ENCODE measurements at regions of chr9 and their contacts with region 1.

Region 1: GRCh38 chr9:68704814-68705530 is at the start of gene PIP5K1B:
- DNase-seq: peak; percentile 83
- H3K4me3 ChIP-seq: peak within 1 kb of the TSS; percentile 51 to 88 (median 74)
- H3K27ac ChIP-seq: peak within 1 kb of the TSS; percentile 46 to 88 (median 85)
- H3K4me1 ChIP-seq: peaks cover 0 to 29% (median 12%) of the 10 kb centered on the region in 4 donors
- H3K27me3 ChIP-seq: peaks cover 0 to 9% (median 0%) of the 10 kb centered on the region in 3 donors
- CTCF ChIP-seq: no peak
- EP300 ChIP-seq: no peak
- POLR2A ChIP-seq: peak in 1 of 2 donors; percentile 67
- total RNA-seq, gene PIP5K1B: 10.3 to 23.5 (median 17.5) TPM

Region 2: DNA sequence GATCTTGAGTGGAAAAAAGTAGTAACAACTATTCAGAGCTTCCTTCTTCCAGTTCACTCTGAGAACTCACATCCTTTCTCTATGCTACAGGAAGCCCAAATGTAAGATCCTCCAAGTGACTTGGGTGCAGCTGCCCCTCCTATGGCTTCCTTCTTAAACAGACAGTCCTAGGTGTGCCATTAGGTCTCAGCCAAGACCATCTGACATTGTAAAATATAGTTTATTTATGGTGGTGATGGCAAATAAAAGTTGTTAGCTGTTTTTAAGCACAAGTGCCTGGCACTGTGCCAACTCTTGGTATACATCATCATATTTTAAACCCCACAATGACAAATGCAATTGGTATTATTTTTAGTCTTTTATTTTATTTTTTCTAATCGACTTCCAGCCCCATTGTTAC is 222.4 kb before region 1 on chr9:
- intact Hi-C with region 1: no loop called
- DNase-seq: no peak
- H3K4me3 ChIP-seq: no peak overlapping the region
- H3K27ac ChIP-seq: peak overlapping the region; percentile 67 to 79 (median 76)
- H3K4me1 ChIP-seq: peaks cover 0 to 47% (median 36%) of the 10 kb centered on the region in 4 donors
- H3K27me3 ChIP-seq: no peaks in the 10 kb centered on the region
- CTCF ChIP-seq: no peak
- EP300 ChIP-seq: no peak
- POLR2A ChIP-seq: no peak

Region 3: GRCh38 chr9:68768619-68769018 is 63.6 kb after region 1 on chr9:
- intact Hi-C with region 1: no loop called
- DNase-seq: no peak
- H3K4me3 ChIP-seq: no peak overlapping the region
- H3K27ac ChIP-seq: no peak overlapping the region
- H3K4me1 ChIP-seq: no peaks in the 10 kb centered on the region
- H3K27me3 ChIP-seq: no peaks in the 10 kb centered on the region
- CTCF ChIP-seq: no peak
- EP300 ChIP-seq: no peak
- POLR2A ChIP-seq: no peak

Region 4: DNA sequence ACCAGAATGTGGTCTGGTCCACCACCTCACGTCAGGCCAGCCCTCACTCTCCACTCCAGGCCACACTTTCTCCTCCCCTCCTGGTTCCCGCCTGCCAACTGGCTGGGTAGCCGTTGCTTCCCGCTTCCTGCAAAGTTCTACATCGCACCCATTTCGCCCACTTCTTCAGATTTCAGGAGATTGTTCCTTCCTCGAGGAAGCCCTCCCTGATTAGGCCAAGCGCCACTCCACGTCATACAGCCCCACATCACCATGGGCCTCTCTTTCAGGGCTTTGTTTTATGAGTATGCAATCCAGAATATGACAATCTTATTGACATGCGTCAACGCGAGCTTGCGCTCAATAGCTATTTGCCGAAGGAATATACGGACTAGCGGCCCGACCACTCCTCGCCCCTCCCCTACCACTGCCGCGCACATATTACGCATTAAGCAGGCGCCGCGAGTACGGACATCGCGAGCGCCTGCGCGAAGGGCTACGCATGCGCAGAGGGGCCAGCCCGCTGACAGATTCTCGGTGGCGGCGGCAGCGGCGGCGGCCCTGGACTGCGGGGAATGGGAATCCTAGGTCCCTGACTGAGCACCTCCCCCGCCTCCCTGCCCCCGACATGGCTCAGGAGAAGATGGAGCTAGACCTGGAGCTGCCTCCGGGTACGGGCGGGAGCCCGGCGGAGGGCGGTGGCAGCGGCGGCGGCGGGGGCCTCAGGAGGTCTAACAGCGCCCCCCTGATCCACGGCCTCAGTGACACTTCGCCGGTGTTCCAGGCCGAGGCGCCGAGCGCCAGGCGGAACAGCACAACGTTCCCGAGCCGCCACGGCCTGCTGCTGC is 74.8 kb after region 1 on chr9:
- intact Hi-C with region 1: loop called (anchors 2 kb)
- DNase-seq: peak; percentile 97
- H3K4me3 ChIP-seq: peak overlapping the region; percentile 77 to 82 (median 80)
- H3K27ac ChIP-seq: peak overlapping the region; percentile 91 to 95 (median 93)
- H3K4me1 ChIP-seq: peaks cover 0 to 50% (median 46%) of the 10 kb centered on the region in 4 donors
- H3K27me3 ChIP-seq: no peaks in the 10 kb centered on the region
- CTCF ChIP-seq: no peak
- EP300 ChIP-seq: no peak
- POLR2A ChIP-seq: peak; percentile 79 to 84

Region 5: GRCh38 chr9:68887232-68887631 is 182.3 kb after region 1 on chr9:
- intact Hi-C with region 1: loop called (anchors 5 kb)
- DNase-seq: no peak
- H3K4me3 ChIP-seq: no peak overlapping the region
- H3K27ac ChIP-seq: peak overlapping the region in 1 of 4 donors; percentile 67
- H3K4me1 ChIP-seq: peaks cover 0 to 5% (median 0%) of the 10 kb centered on the region in 4 donors
- H3K27me3 ChIP-seq: no peaks in the 10 kb centered on the region
- CTCF ChIP-seq: no peak
- EP300 ChIP-seq: no peak
- POLR2A ChIP-seq: no peak

Region 6: GRCh38 chr9:68949271-68950000 is 244.5 kb after region 1 on chr9:
- intact Hi-C with region 1: loop called (anchors 5 kb)
- DNase-seq: no peak
- H3K4me3 ChIP-seq: no peak overlapping the region
- H3K27ac ChIP-seq: peak overlapping the region in 3 of 4 donors; percentile 29 to 46 (median 37)
- H3K4me1 ChIP-seq: peaks cover 0 to 2% (median 0%) of the 10 kb centered on the region in 4 donors
- H3K27me3 ChIP-seq: no peaks in the 10 kb centered on the region
- CTCF ChIP-seq: peak in 2 of 4 experiments; percentile 12 to 19
- EP300 ChIP-seq: no peak
- POLR2A ChIP-seq: no peak

Region 7: GRCh38 chr9:68999393-69000105 is 294.6 kb after region 1 on chr9:
- intact Hi-C with region 1: loop called (anchors 2 kb)
- DNase-seq: peak; percentile 81
- H3K4me3 ChIP-seq: no peak overlapping the region
- H3K27ac ChIP-seq: peak overlapping the region in 1 of 4 donors; percentile 27
- H3K4me1 ChIP-seq: peaks cover 0 to 27% (median 14%) of the 10 kb centered on the region in 4 donors
- H3K27me3 ChIP-seq: no peaks in the 10 kb centered on the region
- CTCF ChIP-seq: peak; percentile 66 to 85 (median 75)
- EP300 ChIP-seq: no peak
- POLR2A ChIP-seq: no peak

Measured in sigmoid colon (tissue), 7 donors.